Tibial artery (tissue), 4 donors: ENCODE measurements at regions of chr6 and their contacts with region 1.

Region 1: DNA sequence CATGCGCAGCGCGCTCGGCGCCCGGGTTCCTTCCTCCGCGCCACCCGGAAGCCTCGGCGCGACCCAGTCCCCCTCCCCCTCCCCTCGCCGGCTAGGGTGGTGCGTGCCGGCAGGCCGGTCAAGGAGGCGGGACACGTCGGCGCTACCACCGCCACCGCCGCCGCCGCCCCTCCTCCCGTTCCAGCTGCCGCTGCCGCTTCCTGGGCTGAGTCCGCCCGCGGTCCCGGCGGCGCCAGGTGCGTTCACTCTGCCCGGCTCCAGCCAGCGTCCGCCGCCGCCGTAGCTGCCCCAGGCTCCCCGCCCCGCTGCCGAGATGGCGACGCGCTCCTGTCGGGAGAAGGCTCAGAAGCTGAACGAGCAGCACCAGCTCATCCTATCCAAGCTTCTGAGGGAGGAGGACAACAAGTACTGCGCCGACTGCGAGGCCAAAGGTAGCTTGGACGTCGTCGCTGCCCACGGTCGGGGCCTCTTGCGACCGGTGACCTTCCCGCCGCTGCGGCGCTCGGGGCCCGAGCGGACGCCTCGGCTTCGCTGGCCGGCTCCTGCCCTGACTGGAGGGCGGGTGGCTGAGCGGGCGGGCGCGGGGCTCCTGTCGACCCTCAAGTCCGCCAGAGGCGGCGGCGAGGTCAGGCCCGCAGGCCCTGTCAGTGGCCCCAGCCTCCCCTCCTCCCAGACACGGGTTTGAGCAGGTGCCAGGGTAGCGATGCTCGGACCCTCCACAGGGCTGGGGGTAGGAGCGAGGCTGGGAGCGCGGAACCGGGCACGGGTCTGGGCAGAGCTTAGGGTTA is at the start of gene SMAP1:
- DNase-seq: peak; percentile 88 to 96
- H3K4me3 ChIP-seq: peak within 1 kb of the TSS; percentile 93 to 95
- H3K27ac ChIP-seq: peak within 1 kb of the TSS; percentile 96
- H3K4me1 ChIP-seq: peaks cover 0 to 22% (median 2%) of the 10 kb centered on the region in 4 donors
- H3K27me3 ChIP-seq: no peaks in the 10 kb centered on the region
- CTCF ChIP-seq: no peak

Region 2: DNA sequence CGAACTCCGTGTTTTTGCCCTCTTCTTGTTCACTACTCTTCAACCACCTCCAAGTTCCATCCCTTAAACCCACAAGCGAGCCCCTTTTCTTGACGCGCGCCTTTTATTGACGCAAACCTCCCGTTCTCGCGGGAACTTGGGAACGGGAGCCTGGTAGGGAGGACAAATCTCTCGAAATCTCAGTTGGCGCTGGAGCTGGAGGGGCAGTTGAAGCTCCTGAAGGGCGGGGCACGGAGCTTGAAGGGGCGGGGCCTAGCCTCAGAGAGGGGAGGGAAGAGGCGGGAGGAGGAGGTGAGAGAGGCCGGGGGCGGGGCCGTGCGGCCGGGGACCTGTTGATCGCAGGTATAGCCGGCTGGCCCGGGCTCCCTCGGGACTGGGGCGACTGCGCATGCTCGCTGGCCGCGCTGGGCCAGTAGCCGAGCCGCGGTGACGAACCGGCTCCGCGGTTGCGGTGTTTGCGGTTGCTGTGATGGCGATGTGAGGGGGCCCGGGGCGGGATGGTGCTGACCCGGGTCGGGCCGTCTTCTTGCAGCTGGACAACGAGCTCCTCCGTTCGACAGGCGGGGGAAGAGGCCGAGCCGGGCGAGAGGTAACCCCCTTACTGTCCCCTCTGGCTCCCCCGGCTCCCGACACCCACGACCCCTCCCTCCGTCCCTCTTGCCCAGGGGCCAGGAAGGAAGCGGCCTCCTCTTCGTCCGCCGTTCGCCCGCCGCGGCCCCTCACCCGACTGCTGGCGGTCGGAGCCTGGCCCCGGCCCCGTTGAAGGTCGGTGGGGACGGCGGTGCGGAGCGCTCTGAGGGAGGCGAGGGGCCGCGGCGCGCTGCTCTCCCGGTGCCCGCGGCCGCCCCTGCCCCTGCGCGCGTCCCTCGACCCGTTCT is 254.6 kb before region 1 on chr6 and contains the start of gene FAM135A:
- intact Hi-C with region 1: loop called (anchors 5 kb)
- DNase-seq: peak; percentile 97 to 99
- H3K4me3 ChIP-seq: peak within 1 kb of the TSS; percentile 97 to 99
- H3K27ac ChIP-seq: peak within 1 kb of the TSS; percentile 90 to 97
- H3K4me1 ChIP-seq: peaks cover 0 to 19% (median 14%) of the 10 kb centered on the region in 4 donors
- H3K27me3 ChIP-seq: no peaks in the 10 kb centered on the region
- CTCF ChIP-seq: no peak